ENCODE measurements at regions of chr17 and their contacts with region 1.

Region 1: GRCh38 chr17:39699818-39700147 is at the start of gene ERBB2:
- DNase-seq: no peak
- total RNA-seq, gene ERBB2: 33.0 to 42.8 TPM

Region 2: GRCh38 chr17:38912221-38912813 is 787.5 kb before region 1 on chr17:
- intact Hi-C with region 1: loop called in 1 of 2 experiments (anchors 5 kb)
- DNase-seq: peak; percentile 76